GM12878 (cell line): ENCODE measurements at regions of chr3 and their contacts with region 1.

Region 1: GRCh38 chr3:107064445-107065060 is 312.7 kb upstream of the CCDC54 start:
- DNase-seq: peak; percentile 25
- ATAC-seq: peak; percentile 95
- H3K4me3 ChIP-seq: no peak overlapping the region
- H3K27ac ChIP-seq: no peak overlapping the region
- H3K4me1 ChIP-seq: no peaks in the 10 kb centered on the region
- H3K27me3 ChIP-seq: no peaks in the 10 kb centered on the region
- CTCF ChIP-seq: peak; percentile 81 to 83 (median 82)
- EP300 ChIP-seq: no peak
- POLR2A ChIP-seq: no peak
- RAD21 ChIP-seq: peak; percentile 98

Region 2: DNA sequence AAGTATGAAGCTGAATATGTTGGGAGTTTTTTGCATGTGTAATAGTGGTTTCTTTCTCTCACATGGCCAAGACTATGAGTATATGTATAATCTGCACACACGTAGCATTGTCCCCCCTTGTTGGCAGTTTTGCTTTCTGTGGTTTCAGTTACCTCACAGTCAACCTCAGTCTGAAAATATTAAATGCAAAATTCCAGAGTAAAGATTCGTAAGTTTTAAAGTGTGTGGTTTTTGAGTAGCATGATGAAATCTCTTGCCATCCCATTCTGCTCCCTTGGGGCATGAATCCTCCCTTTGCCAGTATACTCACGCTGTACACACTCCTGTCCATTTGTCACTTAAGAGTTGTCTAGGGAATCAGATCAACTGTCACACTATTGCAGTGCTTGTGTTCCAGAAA is 429.3 kb before region 1 on chr3:
- CTCF ChIA-PET with region 1: no interaction called
- POLR2A ChIA-PET with region 1: no interaction called
- RAD21 ChIA-PET with region 1: no interaction called
- SMC1A ChIA-PET with region 1: no interaction called
- in situ Hi-C with region 1: no loop called
- intact Hi-C with region 1: loop called (anchors 10 kb)
- DNase-seq: no peak
- ATAC-seq: peak; percentile 90
- H3K4me3 ChIP-seq: no peak overlapping the region
- H3K27ac ChIP-seq: no peak overlapping the region
- H3K4me1 ChIP-seq: no peaks in the 10 kb centered on the region
- H3K27me3 ChIP-seq: no peaks in the 10 kb centered on the region
- CTCF ChIP-seq: no peak
- EP300 ChIP-seq: no peak
- POLR2A ChIP-seq: no peak
- RAD21 ChIP-seq: no peak

Region 3: GRCh38 chr3:106824856-106825255 is 239.7 kb before region 1 on chr3:
- CTCF ChIA-PET with region 1: no interaction called
- POLR2A ChIA-PET with region 1: no interaction called
- RAD21 ChIA-PET with region 1: no interaction called
- SMC1A ChIA-PET with region 1: no interaction called
- in situ Hi-C with region 1: no loop called
- intact Hi-C with region 1: loop called (anchors 2 kb)
- DNase-seq: no peak
- ATAC-seq: peak; percentile 79
- H3K4me3 ChIP-seq: no peak overlapping the region
- H3K27ac ChIP-seq: no peak overlapping the region
- H3K4me1 ChIP-seq: no peaks in the 10 kb centered on the region
- H3K27me3 ChIP-seq: no peaks in the 10 kb centered on the region; a peak in 1 of 4 replicates
- CTCF ChIP-seq: peak; percentile 21 to 33 (median 27); a peak in 3 of 6 replicates
- EP300 ChIP-seq: no peak
- POLR2A ChIP-seq: no peak
- RAD21 ChIP-seq: peak; percentile 43

Region 4: DNA sequence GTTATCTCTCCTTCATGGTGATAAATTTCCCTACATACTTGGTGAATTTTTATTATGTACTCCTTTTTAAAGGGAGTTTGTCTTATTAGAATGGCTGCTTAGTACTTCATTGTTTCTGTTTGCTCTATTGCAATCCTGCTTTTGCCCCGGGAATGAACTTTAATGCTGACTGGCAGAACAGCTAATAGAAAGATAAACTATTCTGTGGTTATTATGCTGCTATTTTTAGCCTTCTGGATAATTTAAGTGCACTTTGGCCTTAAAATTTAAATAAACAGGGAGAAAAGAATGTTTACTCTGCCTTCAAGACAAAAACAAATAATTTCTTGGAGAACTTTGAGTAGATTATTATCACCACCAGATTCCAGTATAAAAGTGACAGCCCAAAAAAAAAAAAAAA is 101.1 kb before region 1 on chr3:
- CTCF ChIA-PET with region 1: no interaction called
- POLR2A ChIA-PET with region 1: no interaction called
- RAD21 ChIA-PET with region 1: no interaction called
- SMC1A ChIA-PET with region 1: no interaction called
- in situ Hi-C with region 1: no loop called
- intact Hi-C with region 1: no loop called
- DNase-seq: no peak
- ATAC-seq: no peak
- H3K4me3 ChIP-seq: no peak overlapping the region
- H3K27ac ChIP-seq: no peak overlapping the region
- H3K4me1 ChIP-seq: no peaks in the 10 kb centered on the region
- H3K27me3 ChIP-seq: no peaks in the 10 kb centered on the region
- CTCF ChIP-seq: no peak
- EP300 ChIP-seq: no peak
- POLR2A ChIP-seq: no peak
- RAD21 ChIP-seq: no peak

Region 5: GRCh38 chr3:107077391-107077790 is 12.8 kb after region 1 on chr3:
- CTCF ChIA-PET with region 1: interaction called, 10 read pairs
- POLR2A ChIA-PET with region 1: no interaction called
- RAD21 ChIA-PET with region 1: no interaction called
- SMC1A ChIA-PET with region 1: interaction called, 3 read pairs
- in situ Hi-C with region 1: no loop called
- intact Hi-C with region 1: no loop called
- DNase-seq: no peak
- ATAC-seq: no peak
- H3K4me3 ChIP-seq: no peak overlapping the region
- H3K27ac ChIP-seq: no peak overlapping the region
- H3K4me1 ChIP-seq: no peaks in the 10 kb centered on the region
- H3K27me3 ChIP-seq: no peaks in the 10 kb centered on the region
- CTCF ChIP-seq: no peak
- EP300 ChIP-seq: no peak
- POLR2A ChIP-seq: no peak
- RAD21 ChIP-seq: no peak